AG04449 (cell line): ENCODE measurements at regions of chr11 and their contacts with region 1.

Region 1: DNA sequence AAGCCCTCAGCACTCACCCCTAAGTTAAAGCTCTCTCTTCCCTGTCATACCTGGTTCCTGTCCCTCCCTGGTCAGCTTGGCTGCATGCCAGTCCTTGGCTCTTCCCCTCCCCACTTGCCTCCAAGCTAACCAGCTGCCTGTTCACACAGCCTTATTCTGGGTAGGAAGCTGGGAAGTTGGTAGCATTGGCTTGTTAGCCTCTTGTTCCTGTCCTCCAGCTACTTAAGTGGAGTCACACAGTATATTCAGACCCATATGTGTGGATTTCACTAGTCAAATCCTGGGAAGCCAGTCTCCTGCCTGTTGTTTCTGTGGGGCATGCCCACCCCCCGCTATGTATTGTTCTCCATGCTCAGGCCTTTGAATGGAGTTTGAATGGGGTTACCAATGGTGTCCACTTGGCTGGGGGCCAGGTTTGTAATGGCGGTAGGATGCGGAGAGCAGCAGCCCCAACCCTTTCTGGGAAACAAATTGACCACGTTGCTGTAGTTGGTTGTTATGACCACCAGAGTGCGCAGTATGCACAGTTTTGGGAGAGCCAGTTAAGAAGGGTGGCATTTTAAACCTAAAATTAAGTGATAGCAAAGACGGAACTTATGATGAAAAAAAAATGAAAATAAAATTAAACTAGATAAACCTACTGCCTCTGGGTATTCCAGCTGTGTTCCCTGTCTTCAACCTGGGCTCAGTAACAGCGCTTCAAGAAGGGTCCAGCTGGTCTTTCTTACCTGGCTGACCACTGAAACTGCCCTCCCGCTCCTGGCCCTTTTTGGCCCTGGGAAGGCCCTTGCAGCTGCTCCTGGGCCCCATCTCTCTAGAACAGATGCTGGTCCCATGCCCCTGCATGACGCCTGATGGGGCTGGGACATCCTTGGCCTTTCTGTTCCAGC is 10.7 kb upstream of the RPS3 start:
- DNase-seq: no peak
- H3K4me3 ChIP-seq: no peak overlapping the region
- CTCF ChIP-seq: peak; percentile 71

Region 2: GRCh38 chr11:75293903-75294302 is 94.7 kb before region 1 on chr11:
- CTCF ChIA-PET with region 1: interaction called, 12 read pairs
- POLR2A ChIA-PET with region 1: no interaction called
- DNase-seq: no peak
- H3K4me3 ChIP-seq: no peak overlapping the region
- CTCF ChIP-seq: no peak

Region 3: DNA sequence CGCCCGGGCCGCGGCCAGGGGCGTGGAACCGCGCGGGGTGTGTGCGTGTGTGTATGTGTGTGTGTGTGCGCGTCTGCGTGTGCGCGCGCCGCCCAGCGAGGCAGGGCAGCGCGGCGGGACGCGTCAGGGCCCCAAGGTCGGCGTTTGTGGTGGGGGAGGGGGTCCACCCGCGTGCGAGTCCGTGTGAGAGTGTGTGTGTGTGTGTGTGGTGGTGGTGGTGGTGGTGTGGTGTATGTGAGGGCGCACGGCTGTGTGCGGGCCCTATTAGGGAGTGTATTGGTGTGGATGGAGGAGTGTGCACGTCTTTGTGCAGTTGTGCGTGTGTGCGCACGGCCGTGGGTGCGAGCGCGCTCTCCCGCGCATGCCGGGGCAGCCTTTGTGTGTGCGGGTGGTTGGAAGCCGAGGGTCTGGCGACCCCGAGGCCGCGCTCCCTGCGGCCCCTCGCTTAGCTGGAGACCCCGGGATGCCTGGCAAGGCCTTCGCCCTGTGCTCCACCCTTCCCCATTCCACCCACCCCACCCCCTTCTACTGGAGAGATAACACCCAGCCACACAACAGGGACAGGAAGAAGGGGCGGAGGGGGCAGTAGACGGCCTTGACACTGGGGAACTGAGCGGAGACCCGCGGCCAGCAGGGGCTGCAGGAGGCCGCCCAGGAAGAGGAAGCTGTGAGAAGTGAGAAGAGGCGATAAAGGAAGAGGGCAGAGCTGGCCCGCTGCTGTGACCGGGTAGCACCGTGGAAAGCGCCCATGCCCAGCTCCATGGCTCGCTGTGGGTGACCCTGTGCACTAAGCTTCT is 36.6 kb before region 1 on chr11:
- CTCF ChIA-PET with region 1: interaction called, 10 read pairs
- POLR2A ChIA-PET with region 1: no interaction called
- DNase-seq: no peak
- H3K4me3 ChIP-seq: peak overlapping the region; percentile 70
- CTCF ChIP-seq: peak; percentile 20

Region 4: DNA sequence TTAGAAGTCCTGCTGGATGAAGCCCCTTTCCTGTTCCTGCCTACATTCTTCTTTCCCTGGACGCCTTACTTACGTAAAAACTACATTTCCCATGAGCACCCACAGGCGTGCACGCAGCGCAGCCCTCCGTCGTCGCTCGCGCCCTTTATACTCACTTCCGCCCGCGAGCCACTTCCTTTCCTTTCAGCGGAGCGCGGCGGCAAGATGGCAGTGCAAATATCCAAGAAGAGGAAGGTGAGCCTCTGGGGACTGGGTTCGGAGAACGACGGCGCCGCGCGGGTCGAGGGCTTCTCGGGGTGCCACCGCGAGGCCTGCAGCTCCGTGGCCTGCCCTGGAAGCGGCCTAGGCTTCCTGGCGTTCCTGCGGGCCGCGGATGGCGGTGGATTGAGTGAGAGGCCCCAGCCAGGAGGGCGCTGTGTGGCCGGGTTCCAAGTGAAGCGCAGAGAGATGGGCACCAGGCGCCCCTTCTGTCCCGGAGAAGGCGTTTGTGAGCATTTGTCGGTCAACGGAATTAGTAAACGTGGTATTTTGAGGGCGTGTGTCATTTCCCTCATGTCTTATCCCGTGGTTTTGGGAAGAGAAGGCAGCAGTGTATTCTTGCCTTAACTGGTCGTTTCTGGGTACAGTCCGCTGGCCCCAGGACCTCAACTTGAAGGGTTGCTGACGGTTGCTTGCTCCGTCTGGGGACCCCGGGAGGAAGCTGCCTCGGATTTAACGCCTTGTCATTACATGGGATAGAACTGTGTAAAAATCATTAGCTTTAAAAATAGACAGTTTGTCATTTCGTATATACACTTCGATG is 10.9 kb after region 1 on chr11 and contains the start of gene RPS3:
- CTCF ChIA-PET with region 1: interaction called, 66 read pairs
- POLR2A ChIA-PET with region 1: interaction called, 8 read pairs
- DNase-seq: peak; percentile 50
- H3K4me3 ChIP-seq: peak within 1 kb of the TSS; percentile 97
- CTCF ChIP-seq: peak; percentile 6

Region 5: DNA sequence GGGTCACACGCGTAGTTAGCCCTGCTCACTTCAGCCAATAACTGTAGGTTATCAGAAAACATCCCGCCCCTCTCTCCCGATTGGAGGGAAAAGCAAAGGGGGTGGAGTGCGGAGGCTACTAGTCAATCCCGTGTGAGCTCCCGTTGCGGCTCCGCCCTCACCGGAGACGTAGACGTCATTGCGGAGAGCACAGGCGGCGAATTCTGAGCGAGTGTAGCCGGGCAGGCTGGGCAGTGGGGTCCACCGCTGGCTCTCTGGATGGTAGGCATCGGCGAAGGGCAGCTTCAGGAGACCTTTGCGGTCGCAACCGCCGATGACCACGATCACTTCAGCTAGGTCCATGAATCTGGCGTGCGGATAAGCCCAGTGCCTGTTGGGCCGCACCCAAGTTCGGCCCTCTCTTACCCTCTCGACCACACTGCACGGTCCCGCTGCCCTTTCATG is 39.7 kb after region 1 on chr11:
- CTCF ChIA-PET with region 1: interaction called, 15 read pairs
- POLR2A ChIA-PET with region 1: no interaction called
- DNase-seq: peak; percentile 21
- H3K4me3 ChIP-seq: peak overlapping the region; percentile 48
- CTCF ChIP-seq: no peak

Region 6: GRCh38 chr11:75525596-75526541 is 137.2 kb after region 1 on chr11 and contains the start of gene GDPD5:
- CTCF ChIA-PET with region 1: interaction called, 270 read pairs
- POLR2A ChIA-PET with region 1: no interaction called
- DNase-seq: no peak
- H3K4me3 ChIP-seq: peak within 1 kb of the TSS; percentile 80
- CTCF ChIP-seq: peak; percentile 62

Region 7: GRCh38 chr11:75577207-75577606 is 188.6 kb after region 1 on chr11:
- CTCF ChIA-PET with region 1: interaction called, 10 read pairs
- POLR2A ChIA-PET with region 1: no interaction called
- DNase-seq: no peak
- H3K4me3 ChIP-seq: no peak overlapping the region
- CTCF ChIP-seq: peak; percentile 68

Region 8: GRCh38 chr11:75615706-75616105 is 227.1 kb after region 1 on chr11:
- CTCF ChIA-PET with region 1: no interaction called
- POLR2A ChIA-PET with region 1: no interaction called
- DNase-seq: no peak
- H3K4me3 ChIP-seq: no peak overlapping the region
- CTCF ChIP-seq: no peak